ENCODE measurements at regions of chr19 and their contacts with region 1.

Region 1: DNA sequence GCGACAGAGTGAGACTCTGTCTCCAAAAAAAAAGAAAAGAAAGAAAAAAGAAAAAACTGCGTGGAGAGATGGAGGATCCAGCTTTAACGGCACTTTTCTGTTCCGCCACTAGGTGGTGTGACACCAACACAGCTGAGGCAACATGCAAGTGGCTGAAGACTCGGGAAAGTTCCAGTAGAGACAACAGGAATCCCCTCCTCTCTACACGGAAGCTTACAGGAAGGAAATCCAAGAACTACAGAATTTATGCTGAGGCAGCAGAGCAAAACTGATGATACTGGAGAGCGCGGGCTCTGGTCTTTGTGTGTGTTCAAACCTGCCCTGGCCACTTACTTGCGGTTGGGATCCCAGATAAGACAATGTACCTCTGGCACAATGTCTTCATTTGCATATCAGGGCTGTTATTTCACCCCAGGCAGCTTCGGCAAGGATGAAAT is 9.9 kb downstream of the RANBP3 start:
- DNase-seq: peak; percentile 79
- H3K4me3 ChIP-seq: no peak overlapping the region
- H3K27ac ChIP-seq: peak overlapping the region in 1 of 2 experiments; percentile 73; a peak in 2 of 4 replicates
- H3K4me1 ChIP-seq: peaks cover 0 to 25% of the 10 kb centered on the region in 2 experiments; a peak in 1 of 4 replicates
- H3K27me3 ChIP-seq: no peaks in the 10 kb centered on the region
- CTCF ChIP-seq: peak; percentile 88
- EP300 ChIP-seq: peak in 1 of 2 experiments; percentile 62; a peak in 2 of 4 replicates
- RAD21 ChIP-seq: peak; percentile 66

Region 2: GRCh38 chr19:5470264-5470671 is 497.7 kb before region 1 on chr19:
- CTCF ChIA-PET with region 1: no interaction called
- POLR2A ChIA-PET with region 1: no interaction called
- DNase-seq: no peak
- H3K4me3 ChIP-seq: no peak overlapping the region
- H3K27ac ChIP-seq: no peak overlapping the region
- H3K4me1 ChIP-seq: peaks cover 0 to 10% of the 10 kb centered on the region in 2 experiments; a peak in 1 of 4 replicates
- H3K27me3 ChIP-seq: 0 out of 2 replicates have a peak, but pooled peaks cover 2% of the 10 kb centered on the region
- CTCF ChIP-seq: no peak
- EP300 ChIP-seq: no peak
- RAD21 ChIP-seq: no peak

Region 3: DNA sequence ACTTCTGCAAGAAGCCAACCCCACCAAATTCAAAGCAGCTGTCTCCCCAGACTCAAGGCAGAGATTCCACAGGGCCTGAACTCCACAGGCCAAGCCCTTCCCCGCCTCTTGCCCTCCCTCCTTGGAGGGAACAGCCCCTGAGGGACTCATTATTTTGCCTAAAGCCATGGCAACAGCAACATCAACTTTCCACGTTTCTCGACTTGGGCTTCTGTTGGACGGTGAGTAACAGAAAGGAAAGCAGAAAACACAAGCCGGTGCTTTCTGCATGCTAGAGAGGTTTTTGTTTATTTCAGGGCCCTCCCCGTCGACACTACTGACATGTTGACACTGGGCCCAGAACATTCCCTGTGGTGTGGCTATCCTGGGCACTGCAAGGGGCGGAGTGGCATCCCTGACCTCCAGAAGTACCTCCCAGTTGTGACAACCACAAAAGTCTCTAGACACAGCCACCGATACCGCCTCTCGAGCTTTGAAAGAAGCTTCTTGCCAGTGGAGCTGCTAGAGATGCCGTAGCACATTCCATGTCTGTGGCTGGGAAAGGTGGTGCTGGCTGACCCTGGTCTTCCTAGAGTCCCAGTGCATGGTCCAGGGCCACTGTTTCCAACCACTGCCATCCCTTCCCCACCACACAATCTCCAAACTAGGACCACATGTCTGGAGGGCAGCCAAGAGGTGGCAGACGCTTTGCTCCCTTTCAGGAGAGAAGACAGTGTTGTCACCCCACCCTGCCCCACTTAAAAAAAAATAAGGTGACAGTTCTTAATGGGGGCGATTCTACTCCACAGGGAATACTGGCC is 41.2 kb before region 1 on chr19:
- CTCF ChIA-PET with region 1: interaction called, 11 read pairs
- POLR2A ChIA-PET with region 1: no interaction called
- DNase-seq: peak; percentile 83
- H3K4me3 ChIP-seq: no peak overlapping the region
- H3K27ac ChIP-seq: peak overlapping the region in 1 of 2 experiments; percentile 96; a peak in 2 of 4 replicates
- H3K4me1 ChIP-seq: peaks cover 0 to 45% of the 10 kb centered on the region in 2 experiments; a peak in 2 of 4 replicates
- H3K27me3 ChIP-seq: no peaks in the 10 kb centered on the region
- CTCF ChIP-seq: no peak
- EP300 ChIP-seq: peak in 1 of 2 experiments; percentile 52; a peak in 1 of 4 replicates
- RAD21 ChIP-seq: no peak; the same call in 1 of the 2 replicates

Region 4: GRCh38 chr19:5934774-5935472 is 33.1 kb before region 1 on chr19:
- CTCF ChIA-PET with region 1: interaction called, 44 read pairs
- POLR2A ChIA-PET with region 1: interaction called, 4 read pairs
- DNase-seq: peak; percentile 91
- H3K4me3 ChIP-seq: no peak overlapping the region
- H3K27ac ChIP-seq: peak overlapping the region; percentile 45 to 94
- H3K4me1 ChIP-seq: peaks cover 13 to 67% of the 10 kb centered on the region in 2 experiments
- H3K27me3 ChIP-seq: no peaks in the 10 kb centered on the region
- CTCF ChIP-seq: no peak
- EP300 ChIP-seq: peak in 1 of 2 experiments; percentile 75; a peak in 1 of 4 replicates
- RAD21 ChIP-seq: no peak

Region 5: DNA sequence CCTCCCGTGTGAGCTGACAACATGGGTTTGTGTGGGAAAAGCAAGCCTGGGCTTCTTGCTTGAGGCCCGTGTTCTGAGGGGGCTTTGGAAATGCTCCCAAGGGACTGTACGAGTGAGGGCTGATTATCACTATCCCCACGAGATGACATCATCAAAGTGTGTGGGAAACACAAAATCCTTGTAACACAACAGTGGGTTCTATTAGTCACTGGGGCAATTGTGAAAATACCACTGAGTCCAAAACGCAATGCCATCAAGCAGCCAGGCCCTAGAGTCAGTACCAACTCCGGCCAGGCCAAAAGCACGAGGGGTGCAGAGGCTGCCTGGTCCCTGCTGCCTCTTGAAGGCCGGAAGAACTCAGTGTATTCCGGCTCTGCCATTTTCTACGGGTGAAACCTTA is 24.4 kb before region 1 on chr19:
- CTCF ChIA-PET with region 1: interaction called, 44 read pairs
- POLR2A ChIA-PET with region 1: no interaction called
- DNase-seq: no peak
- H3K4me3 ChIP-seq: no peak overlapping the region
- H3K27ac ChIP-seq: no peak overlapping the region
- H3K4me1 ChIP-seq: peaks cover 0 to 19% of the 10 kb centered on the region in 2 experiments; a peak in 1 of 4 replicates
- H3K27me3 ChIP-seq: no peaks in the 10 kb centered on the region
- CTCF ChIP-seq: no peak
- EP300 ChIP-seq: no peak
- RAD21 ChIP-seq: no peak

Region 6: DNA sequence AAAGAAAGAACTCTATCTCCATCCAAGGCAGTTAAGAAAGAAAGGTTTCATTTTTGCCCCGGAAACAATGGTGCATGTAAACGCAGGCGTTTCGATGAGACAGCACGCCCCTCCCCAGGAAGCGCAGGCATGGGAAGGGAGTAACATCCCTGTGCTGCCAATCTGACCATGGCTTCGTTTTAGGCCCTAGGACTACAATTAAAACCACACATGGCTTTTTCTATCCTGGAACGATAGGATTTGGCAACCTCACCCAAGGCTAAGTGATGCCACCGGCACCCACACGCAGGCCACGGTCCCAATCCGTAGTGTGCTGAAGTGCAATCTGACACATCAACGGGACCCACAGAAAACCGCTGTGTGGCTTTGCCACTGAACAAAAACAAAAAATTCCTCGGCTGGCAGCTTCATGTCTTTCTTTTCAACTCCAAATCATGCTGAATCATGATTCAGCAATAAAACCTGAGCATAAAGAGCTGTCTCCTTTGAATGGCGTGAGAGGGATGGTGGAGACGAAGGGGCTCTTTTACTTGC is 14.3 kb before region 1 on chr19:
- CTCF ChIA-PET with region 1: interaction called, 34 read pairs
- POLR2A ChIA-PET with region 1: interaction called, 3 read pairs
- DNase-seq: no peak
- H3K4me3 ChIP-seq: no peak overlapping the region
- H3K27ac ChIP-seq: peak overlapping the region; percentile 53 to 96; a peak in 3 of 4 replicates
- H3K4me1 ChIP-seq: peaks cover 31 to 78% of the 10 kb centered on the region in 2 experiments
- H3K27me3 ChIP-seq: no peaks in the 10 kb centered on the region
- CTCF ChIP-seq: no peak
- EP300 ChIP-seq: no peak
- RAD21 ChIP-seq: no peak

Region 7: GRCh38 chr19:6185835-6186834 is 218.1 kb after region 1 on chr19:
- CTCF ChIA-PET with region 1: no interaction called
- POLR2A ChIA-PET with region 1: no interaction called
- DNase-seq: no peak
- H3K4me3 ChIP-seq: no peak overlapping the region
- H3K27ac ChIP-seq: no peak overlapping the region
- H3K4me1 ChIP-seq: no peaks in the 10 kb centered on the region
- H3K27me3 ChIP-seq: no peaks in the 10 kb centered on the region
- CTCF ChIP-seq: no peak
- EP300 ChIP-seq: no peak
- RAD21 ChIP-seq: no peak